Sigmoid colon (tissue), 7 donors: ENCODE measurements at regions of chr1 and their contacts with region 1.

Region 1: GRCh38 chr1:56056438-56057287 is 522.7 kb downstream of the PLPP3 start:
- DNase-seq: no peak
- H3K4me3 ChIP-seq: no peak overlapping the region
- H3K27ac ChIP-seq: peak overlapping the region in 3 of 4 donors; percentile 36 to 56 (median 41)
- H3K4me1 ChIP-seq: peaks cover 0 to 28% (median 27%) of the 10 kb centered on the region in 4 donors
- H3K27me3 ChIP-seq: no peaks in the 10 kb centered on the region
- CTCF ChIP-seq: no peak
- EP300 ChIP-seq: no peak
- POLR2A ChIP-seq: no peak

Region 2: DNA sequence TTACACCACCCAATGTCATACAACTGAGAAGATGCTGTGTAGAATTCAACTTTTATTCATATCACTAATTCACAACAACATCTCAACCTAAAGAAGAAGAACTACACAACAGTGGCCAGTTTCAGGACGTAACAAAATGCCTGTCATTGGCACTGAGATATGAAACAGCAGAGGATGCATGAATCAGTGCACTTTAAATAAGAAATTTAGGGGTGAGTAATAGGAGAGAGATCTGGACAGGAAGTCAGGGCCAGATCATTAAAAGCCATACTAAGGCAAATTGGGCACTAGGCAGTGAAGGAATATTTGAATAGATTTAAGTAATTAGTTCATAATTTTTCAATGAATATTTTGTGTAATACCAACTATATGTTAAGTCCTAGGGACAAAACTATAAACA is 12.2 kb after region 1 on chr1:
- intact Hi-C with region 1: loop called (anchors 1 kb)
- DNase-seq: no peak
- H3K4me3 ChIP-seq: no peak overlapping the region
- H3K27ac ChIP-seq: no peak overlapping the region
- H3K4me1 ChIP-seq: peaks cover 0 to 21% (median 12%) of the 10 kb centered on the region in 4 donors
- H3K27me3 ChIP-seq: no peaks in the 10 kb centered on the region
- CTCF ChIP-seq: no peak
- EP300 ChIP-seq: no peak
- POLR2A ChIP-seq: no peak

Region 3: GRCh38 chr1:56477164-56478111 is 420.8 kb after region 1 on chr1:
- intact Hi-C with region 1: loop called (anchors 10 kb)
- DNase-seq: peak; percentile 87
- H3K4me3 ChIP-seq: peak overlapping the region; percentile 49 to 67 (median 58)
- H3K27ac ChIP-seq: peak overlapping the region; percentile 83 to 94 (median 91)
- H3K4me1 ChIP-seq: peaks cover 0 to 14% (median 7%) of the 10 kb centered on the region in 4 donors
- H3K27me3 ChIP-seq: no peaks in the 10 kb centered on the region
- CTCF ChIP-seq: no peak
- EP300 ChIP-seq: no peak
- POLR2A ChIP-seq: no peak